Spleen (tissue), 13 donors: ENCODE measurements at regions of chr13 and their contacts with region 1.

Region 1: DNA sequence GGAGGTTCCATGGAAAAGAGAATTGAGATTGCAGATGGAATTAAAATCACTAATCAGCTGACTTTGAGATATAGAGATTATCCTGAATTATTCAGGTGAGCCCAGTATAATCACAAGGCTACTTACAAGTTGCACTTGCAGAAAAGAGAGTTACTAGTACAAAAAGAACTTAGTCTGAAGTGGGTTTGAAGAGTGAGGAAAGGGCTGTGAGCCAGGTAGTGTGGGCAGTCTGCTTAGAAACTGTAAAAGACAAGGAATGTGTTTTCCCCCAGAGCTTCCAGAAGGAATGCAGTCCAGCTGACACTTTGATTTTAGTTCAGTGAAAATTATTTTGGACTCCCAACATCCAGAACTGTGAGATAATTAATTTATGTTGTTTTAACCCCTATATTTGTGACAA is 285.4 kb upstream of the GPC6 start:
- DNase-seq: no peak
- H3K4me3 ChIP-seq: no peak overlapping the region
- H3K27ac ChIP-seq: no peak overlapping the region
- H3K4me1 ChIP-seq: no peaks in the 10 kb centered on the region
- H3K27me3 ChIP-seq: no peaks in the 10 kb centered on the region
- CTCF ChIP-seq: no peak
- POLR2A ChIP-seq: no peak

Region 2: GRCh38 chr13:93066187-93066586 is 125.0 kb after region 1 on chr13:
- intact Hi-C with region 1: no loop called
- DNase-seq: no peak
- H3K4me3 ChIP-seq: no peak overlapping the region
- H3K27ac ChIP-seq: no peak overlapping the region
- H3K4me1 ChIP-seq: no peaks in the 10 kb centered on the region
- H3K27me3 ChIP-seq: no peaks in the 10 kb centered on the region
- CTCF ChIP-seq: no peak
- POLR2A ChIP-seq: no peak

Region 3: GRCh38 chr13:93098972-93099371 is 157.8 kb after region 1 on chr13:
- intact Hi-C with region 1: loop called (anchors 10 kb)
- DNase-seq: no peak
- H3K4me3 ChIP-seq: no peak overlapping the region
- H3K27ac ChIP-seq: no peak overlapping the region
- H3K4me1 ChIP-seq: no peaks in the 10 kb centered on the region
- H3K27me3 ChIP-seq: no peaks in the 10 kb centered on the region
- CTCF ChIP-seq: no peak
- POLR2A ChIP-seq: no peak